ENCODE measurements at regions of chr6 and their contacts with region 1.

Region 1: GRCh38 chr6:84422380-84422968 is 195.0 kb upstream of the CEP162 start:
- DNase-seq: peak; percentile 16
- ATAC-seq: peak; percentile 97
- H3K4me3 ChIP-seq: no peak overlapping the region
- H3K27ac ChIP-seq: no peak overlapping the region
- H3K4me1 ChIP-seq: no peaks in the 10 kb centered on the region
- H3K27me3 ChIP-seq: no peaks in the 10 kb centered on the region; a peak in 1 of 5 replicates
- CTCF ChIP-seq: peak; percentile 74
- EP300 ChIP-seq: no peak
- POLR2A ChIP-seq: no peak
- RAD21 ChIP-seq: peak; percentile 42; the same call in 1 of the 2 replicates

Region 2: GRCh38 chr6:84243240-84243639 is 179.2 kb before region 1 on chr6:
- CTCF ChIA-PET with region 1: no interaction called
- POLR2A ChIA-PET with region 1: no interaction called
- in situ Hi-C with region 1: no loop called
- intact Hi-C with region 1: loop called (anchors 5 kb)
- DNase-seq: peak; percentile 4
- ATAC-seq: no peak
- H3K4me3 ChIP-seq: no peak overlapping the region
- H3K27ac ChIP-seq: no peak overlapping the region
- H3K4me1 ChIP-seq: no peaks in the 10 kb centered on the region
- H3K27me3 ChIP-seq: no peaks in the 10 kb centered on the region
- CTCF ChIP-seq: peak; percentile 45
- EP300 ChIP-seq: no peak
- POLR2A ChIP-seq: no peak
- RAD21 ChIP-seq: no peak

Region 3: DNA sequence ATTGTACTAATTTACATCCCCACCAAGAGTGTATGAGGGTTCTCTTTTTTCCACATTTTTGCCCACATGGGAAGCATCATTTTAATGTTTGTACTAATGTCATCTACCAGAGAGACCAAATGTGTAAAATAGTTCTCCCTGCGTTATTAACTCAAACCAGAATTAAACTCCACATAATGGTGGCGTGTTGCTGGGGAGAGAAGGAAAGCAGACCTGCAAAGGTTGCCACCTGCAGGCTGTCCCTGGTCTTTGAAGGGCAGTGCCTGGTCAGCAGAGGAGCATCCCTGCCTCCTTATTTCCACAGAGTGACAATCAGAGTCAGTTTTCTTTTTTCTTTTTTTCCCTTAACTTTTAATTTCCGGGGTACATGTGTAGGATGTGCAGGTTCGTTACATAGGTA is 127.4 kb after region 1 on chr6:
- CTCF ChIA-PET with region 1: no interaction called
- POLR2A ChIA-PET with region 1: no interaction called
- in situ Hi-C with region 1: no loop called
- intact Hi-C with region 1: loop called (anchors 1 kb)
- DNase-seq: no peak
- ATAC-seq: peak; percentile 85
- H3K4me3 ChIP-seq: no peak overlapping the region
- H3K27ac ChIP-seq: no peak overlapping the region
- H3K4me1 ChIP-seq: no peaks in the 10 kb centered on the region
- H3K27me3 ChIP-seq: no peaks in the 10 kb centered on the region
- CTCF ChIP-seq: peak; percentile 25; the same call in 1 of the 2 replicates
- EP300 ChIP-seq: no peak
- POLR2A ChIP-seq: no peak
- RAD21 ChIP-seq: no peak

Measured in HepG2 (cell line).